ENCODE measurements at regions of chr7 and their contacts with region 1.

Region 1: GRCh38 chr7:140517546-140518369 is 38.5 kb upstream of the MKRN1 start:
- DNase-seq: peak; percentile 95
- H3K4me3 ChIP-seq: no peak overlapping the region
- H3K27ac ChIP-seq: no peak overlapping the region
- H3K4me1 ChIP-seq: no peaks in the 10 kb centered on the region
- H3K27me3 ChIP-seq: no peaks in the 10 kb centered on the region

Region 2: DNA sequence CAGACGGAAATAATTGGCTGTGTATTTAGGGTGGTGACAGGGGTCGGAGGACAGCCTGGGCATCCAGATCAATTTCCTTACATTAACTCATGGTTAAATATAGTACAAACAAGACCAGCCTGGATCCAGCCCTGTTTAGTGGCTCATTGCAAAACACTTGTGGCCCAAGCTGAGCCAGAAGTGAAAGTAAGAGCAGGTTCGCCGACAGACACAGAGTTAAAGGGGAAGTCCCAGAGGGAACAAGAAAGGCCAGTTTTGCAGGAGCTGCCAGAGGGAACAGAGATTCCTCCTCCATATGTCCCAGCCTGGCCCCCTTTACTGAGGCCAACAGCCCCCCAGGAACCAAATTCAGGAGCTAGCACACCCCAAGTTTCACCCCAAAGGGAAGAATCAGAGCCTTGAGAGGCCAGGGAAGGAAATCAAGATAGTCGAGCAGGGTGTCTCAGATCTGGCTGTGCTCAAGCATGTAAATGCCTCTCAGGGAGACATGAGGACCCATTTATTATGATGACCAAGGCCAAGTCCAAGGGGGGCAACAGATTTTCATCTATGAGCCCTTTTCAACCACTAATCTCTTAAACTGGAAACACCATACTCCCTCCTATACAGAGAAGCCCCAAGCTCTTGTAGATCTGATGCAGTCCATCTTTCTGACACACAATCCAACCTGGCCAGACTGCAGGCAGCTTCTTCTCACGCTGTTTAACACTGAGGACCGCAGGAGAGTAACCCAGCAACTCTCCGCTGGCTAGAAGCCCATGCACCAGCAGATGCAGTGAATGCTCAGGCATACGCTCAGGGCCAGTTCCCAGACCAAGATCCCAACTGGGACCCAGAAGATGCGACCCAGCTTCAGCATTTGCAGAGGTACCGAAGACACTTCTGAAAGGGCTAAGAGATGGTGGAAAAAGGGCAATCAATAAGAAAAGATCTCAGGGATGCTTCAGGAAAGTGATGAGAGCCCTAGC is 139.1 kb after region 1 on chr7:
- in situ Hi-C with region 1: loop called (anchors 5 kb)
- DNase-seq: peak; percentile 79
- H3K4me3 ChIP-seq: peak overlapping the region; percentile 70
- H3K27ac ChIP-seq: 0 out of 2 replicates have a peak overlapping the region, but pooled peaks have one; percentile 10
- H3K4me1 ChIP-seq: 0 out of 2 replicates have a peak, but pooled peaks cover 12% of the 10 kb centered on the region
- H3K27me3 ChIP-seq: no peaks in the 10 kb centered on the region

Region 3: GRCh38 chr7:141014524-141015395 is 497.0 kb after region 1 on chr7 and contains the start of gene MRPS33:
- in situ Hi-C with region 1: loop called (anchors 25 kb)
- DNase-seq: peak; percentile 98
- H3K4me3 ChIP-seq: peak within 1 kb of the TSS; percentile 82
- H3K27ac ChIP-seq: peak within 1 kb of the TSS; percentile 81
- H3K4me1 ChIP-seq: peaks cover 16% of the 10 kb centered on the region
- H3K27me3 ChIP-seq: no peaks in the 10 kb centered on the region
- total RNA-seq, gene MRPS33: 12.0 and 24.0 TPM in 2 replicates